HEK293T (cell line): ENCODE measurements at regions of chr5 and their contacts with region 1.

Region 1: GRCh38 chr5:173331956-173332479 is 3.8 kb upstream of the STC2 start:
- DNase-seq: peak; percentile 91

Region 2: GRCh38 chr5:173187054-173187789 is 144.8 kb before region 1 on chr5:
- CTCF ChIA-PET with region 1: no interaction called
- POLR2A ChIA-PET with region 1: no interaction called
- DNase-seq: no peak

Region 3: GRCh38 chr5:173288632-173289031 is 43.4 kb before region 1 on chr5:
- CTCF ChIA-PET with region 1: interaction called, 171 read pairs
- POLR2A ChIA-PET with region 1: interaction called, 427 read pairs
- DNase-seq: no peak

Region 4: GRCh38 chr5:173293817-173294672 is 38.0 kb before region 1 on chr5:
- CTCF ChIA-PET with region 1: interaction called, 171 read pairs
- POLR2A ChIA-PET with region 1: interaction called, 427 read pairs
- DNase-seq: peak; percentile 87

Region 5: GRCh38 chr5:173302547-173303066 is 29.4 kb before region 1 on chr5:
- CTCF ChIA-PET with region 1: interaction called, 171 read pairs
- POLR2A ChIA-PET with region 1: interaction called, 427 read pairs
- DNase-seq: peak; percentile 78

Region 6: DNA sequence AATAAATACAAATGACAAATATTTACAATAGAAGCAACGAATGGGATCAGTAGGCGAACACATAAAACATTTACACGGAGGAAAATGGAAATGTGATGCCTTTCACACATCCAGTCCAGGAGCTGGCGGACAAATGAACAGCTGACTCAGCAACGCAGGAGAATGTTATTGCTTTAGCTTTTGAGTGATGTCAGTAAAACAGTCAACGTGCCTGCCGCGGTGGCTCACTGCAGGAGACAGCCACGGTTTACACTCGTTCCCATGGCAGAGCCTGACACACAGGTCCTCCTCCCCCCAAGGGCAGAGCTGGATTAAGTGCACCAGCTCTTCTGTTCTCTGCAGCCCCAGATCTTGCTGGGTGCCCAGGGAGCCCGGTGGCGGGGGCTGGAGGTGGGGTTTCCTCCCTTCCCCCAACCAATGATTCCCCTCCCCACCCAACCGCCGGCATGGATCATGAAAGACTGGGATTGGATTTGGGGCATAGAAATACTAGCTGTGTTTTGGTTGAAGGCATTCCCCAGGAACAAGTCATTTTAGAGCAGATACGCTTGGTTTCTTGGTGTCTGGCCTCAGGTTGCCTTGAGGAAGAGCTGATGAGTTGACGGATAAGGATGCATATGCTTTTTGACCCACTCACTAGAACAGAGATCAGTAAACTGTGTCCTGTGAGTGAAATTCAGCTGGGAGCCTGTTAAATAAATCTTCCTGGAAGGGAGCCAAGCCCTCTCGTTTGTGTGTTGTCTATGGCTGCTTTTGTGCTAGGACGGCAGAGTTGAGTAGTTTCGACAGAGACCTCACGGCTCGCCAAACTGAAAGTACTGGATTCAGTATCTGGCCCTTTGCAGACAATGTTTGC is 16.3 kb before region 1 on chr5:
- CTCF ChIA-PET with region 1: interaction called, 7 read pairs
- POLR2A ChIA-PET with region 1: interaction called, 325 read pairs
- DNase-seq: peak; percentile 80

Region 7: DNA sequence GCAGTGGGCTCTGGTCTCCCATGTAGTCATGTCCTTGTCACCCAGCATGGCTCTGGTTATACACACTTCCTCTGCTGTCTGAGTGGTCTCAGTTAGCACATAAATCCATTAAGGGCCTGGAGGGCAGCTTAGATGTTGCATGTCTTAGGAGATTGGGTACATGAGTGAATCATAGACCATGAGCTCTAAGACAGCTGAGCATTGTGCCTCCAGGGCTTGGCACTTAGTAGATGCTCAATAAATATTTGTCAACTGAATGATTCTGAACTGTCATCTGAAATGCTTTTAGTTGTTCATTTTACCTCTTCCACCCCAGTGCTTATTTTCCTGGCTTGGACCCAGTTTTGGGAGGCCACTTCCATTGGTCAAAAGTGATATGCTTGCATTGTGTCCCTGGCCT is 148.9 kb after region 1 on chr5:
- CTCF ChIA-PET with region 1: no interaction called
- POLR2A ChIA-PET with region 1: no interaction called
- DNase-seq: no peak